ENCODE measurements at regions of chr20 and their contacts with region 1.

Region 1: GRCh38 chr20:49893242-49894072 is 21.9 kb downstream of the SPATA2 start:
- DNase-seq: no peak
- H3K4me3 Mint-ChIP-seq: peak overlapping the region; percentile 48
- H3K27ac Mint-ChIP-seq: peak overlapping the region; percentile 82
- H3K4me1 Mint-ChIP-seq: peaks cover 17% of the 10 kb centered on the region
- H3K27me3 Mint-ChIP-seq: no peaks in the 10 kb centered on the region

Region 2: GRCh38 chr20:49915378-49916145 is 22.1 kb after region 1 on chr20 and contains the start of gene SPATA2:
- intact Hi-C with region 1: loop called (anchors 2 kb)
- DNase-seq: peak; percentile 97
- H3K4me3 Mint-ChIP-seq: peak within 1 kb of the TSS; percentile 96
- H3K27ac Mint-ChIP-seq: peak within 1 kb of the TSS; percentile 100
- H3K4me1 Mint-ChIP-seq: peaks cover 23% of the 10 kb centered on the region
- H3K27me3 Mint-ChIP-seq: no peaks in the 10 kb centered on the region
- total RNA-seq, gene SPATA2: 8.8 and 9.9 TPM in 2 replicates

Region 3: GRCh38 chr20:49928401-49929141 is 35.1 kb after region 1 on chr20:
- intact Hi-C with region 1: loop called (anchors 2 kb)
- DNase-seq: peak; percentile 93
- H3K4me3 Mint-ChIP-seq: no peak overlapping the region
- H3K27ac Mint-ChIP-seq: peak overlapping the region; percentile 28
- H3K4me1 Mint-ChIP-seq: peaks cover 3% of the 10 kb centered on the region
- H3K27me3 Mint-ChIP-seq: peaks cover 2% of the 10 kb centered on the region

Measured in activated CD4-positive, alpha-beta T cell treated with anti-CD3 and anti-CD28 coated beads, Interleukin-2, amount 10 ng/mL, durations not matched to agents 24 days and 14 days (primary cell).